BJ (cell line): ENCODE measurements at regions of chr7 and their contacts with region 1.

Region 1: DNA sequence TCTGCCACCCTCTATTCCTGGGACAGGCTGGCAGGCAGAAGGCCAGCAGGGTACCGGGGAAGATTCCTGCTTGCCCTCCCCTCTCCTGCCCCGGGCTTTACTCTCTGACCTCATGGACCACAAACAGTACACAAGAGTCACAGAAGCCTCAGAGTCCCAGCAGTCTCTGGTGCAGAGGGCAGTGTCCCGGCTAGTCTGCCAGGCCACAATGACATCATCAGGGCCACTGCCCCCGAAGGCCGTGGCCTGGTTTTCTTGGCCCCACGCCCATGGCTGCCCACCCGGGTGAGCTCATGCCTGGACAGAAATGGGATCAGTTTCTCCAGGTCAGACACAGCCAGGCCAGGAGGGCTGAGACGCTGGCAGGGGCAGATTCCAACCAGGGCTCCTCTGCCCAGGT is 91.9 kb downstream of the MYL10 start:
- DNase-seq: no peak
- H3K4me3 ChIP-seq: no peak overlapping the region
- H3K27me3 ChIP-seq: peaks cover 1% of the 10 kb centered on the region
- CTCF ChIP-seq: no peak

Region 2: DNA sequence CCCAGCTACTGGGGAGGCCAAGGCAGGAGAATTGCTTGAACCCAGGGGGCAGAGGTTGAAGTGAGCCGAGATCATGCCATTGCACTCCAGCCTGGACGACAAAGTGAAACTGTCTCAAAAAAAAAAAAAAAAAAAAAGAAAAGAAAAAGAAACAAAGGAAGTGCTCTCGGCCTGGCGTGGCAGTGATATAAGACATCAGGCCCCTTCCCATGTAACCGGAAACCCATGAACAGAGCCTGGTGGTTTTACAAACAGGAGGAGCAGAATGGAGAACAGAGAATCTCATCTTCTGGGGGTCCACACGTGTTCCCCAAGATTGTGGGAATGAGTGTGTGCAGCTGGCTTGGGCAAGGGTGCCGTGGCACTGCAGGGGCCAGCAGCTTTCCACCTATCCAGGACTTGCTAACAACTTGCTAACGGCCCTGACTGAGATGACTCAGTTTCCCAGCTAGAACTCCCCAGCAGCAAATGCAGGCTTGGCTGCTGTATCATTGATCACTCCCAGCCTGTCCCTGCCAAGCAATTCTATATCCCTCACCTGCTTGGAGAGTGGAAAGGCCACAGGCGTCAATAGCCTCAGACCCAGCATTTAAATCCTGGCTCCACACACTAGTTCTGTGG is 71.5 kb before region 1 on chr7:
- CTCF ChIA-PET with region 1: no interaction called
- POLR2A ChIA-PET with region 1: no interaction called
- DNase-seq: no peak
- H3K4me3 ChIP-seq: no peak overlapping the region
- H3K27me3 ChIP-seq: peaks cover 2% of the 10 kb centered on the region; the same call in 1 of the 2 replicates
- CTCF ChIP-seq: no peak

Region 3: DNA sequence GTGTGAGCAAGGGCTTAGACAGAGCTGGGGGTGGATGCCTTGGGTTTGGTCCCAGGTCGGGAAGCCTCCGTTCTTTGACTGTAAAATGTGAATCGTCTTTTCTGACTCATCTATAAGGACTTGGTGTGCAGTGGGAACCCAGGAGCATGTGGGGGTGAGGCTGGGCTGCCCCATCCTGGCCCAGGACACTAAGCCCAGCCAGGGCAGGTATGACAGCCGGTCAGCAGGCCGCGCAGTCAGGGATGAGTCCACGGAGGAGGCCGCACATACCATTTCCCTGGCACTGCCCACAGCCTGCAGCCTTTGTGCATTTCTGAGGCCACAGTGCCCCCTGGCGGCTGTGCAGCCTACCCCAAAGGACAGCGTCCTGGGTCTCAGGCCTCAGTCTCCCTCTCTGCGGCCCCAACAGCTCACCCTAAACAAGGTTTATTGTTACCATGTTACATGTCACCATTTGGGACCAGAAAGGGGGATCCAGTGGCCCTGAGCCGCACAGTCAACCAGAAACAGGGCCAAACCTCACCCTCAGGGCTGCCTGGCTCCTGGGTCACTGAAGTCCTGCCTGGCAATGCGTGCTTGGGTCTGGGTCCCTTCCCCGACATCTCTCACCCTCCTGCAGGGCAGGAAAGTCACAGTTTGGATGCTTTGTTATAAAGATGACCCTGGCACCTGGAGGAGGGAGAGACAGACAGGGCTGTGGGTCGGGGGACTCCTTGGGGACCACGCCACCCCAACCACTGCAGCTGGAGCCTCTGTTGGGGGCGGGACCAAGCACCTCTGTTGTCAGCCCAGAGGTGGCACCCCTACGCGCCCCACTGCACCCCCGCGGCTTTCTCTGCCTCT is 735.1 kb after region 1 on chr7:
- CTCF ChIA-PET with region 1: interaction called, 72 read pairs
- POLR2A ChIA-PET with region 1: no interaction called
- DNase-seq: no peak
- H3K4me3 ChIP-seq: no peak overlapping the region
- H3K27me3 ChIP-seq: no peaks in the 10 kb centered on the region
- CTCF ChIP-seq: peak; percentile 92